ENCODE measurements at regions of chr10 and their contacts with region 1.

Region 1: DNA sequence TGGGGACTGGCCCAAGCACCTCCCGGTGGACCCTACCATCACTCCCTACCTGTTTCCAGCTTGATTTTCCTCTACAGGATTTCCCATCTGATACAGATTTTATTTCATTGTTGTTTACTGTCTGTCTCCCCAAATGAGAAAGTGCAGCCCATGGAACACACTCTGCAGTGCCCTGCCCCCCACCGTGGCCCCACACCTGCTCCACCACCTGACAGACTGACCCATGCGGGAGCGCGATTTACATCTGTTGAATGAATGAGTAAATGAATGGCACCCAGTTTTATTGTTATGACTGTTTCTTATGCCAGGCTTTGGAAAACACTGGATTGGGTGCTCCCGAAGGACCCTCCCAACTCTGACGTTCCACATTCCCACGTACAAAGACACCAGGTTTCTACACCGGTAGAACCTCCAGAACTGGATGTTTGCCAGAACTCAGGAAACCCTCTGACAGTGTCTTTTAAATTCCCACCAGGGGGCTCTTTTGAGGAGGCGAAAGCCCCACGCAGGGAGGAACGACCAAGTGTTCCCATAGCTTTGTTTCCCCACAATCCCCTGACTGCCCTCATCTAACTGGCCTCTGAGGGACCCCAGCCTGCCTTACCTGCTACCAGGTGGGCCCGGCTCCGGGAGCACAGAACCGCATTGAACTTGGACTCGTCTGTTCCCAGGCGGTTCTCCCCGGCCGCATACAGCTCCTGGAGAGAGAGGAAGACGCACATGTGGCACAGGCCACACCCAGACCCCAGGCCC is 29.0 kb downstream of the PLAC9 start:
- DNase-seq: peak in 2 of 10 donors; percentile 27 to 48
- H3K4me3 ChIP-seq: no peak overlapping the region
- H3K27ac ChIP-seq: peak overlapping the region in 40 of 59 donors; percentile 3 to 96 (median 60)
- H3K27me3 ChIP-seq: no peaks in the 10 kb centered on the region
- CTCF ChIP-seq: no peak

Region 2: DNA sequence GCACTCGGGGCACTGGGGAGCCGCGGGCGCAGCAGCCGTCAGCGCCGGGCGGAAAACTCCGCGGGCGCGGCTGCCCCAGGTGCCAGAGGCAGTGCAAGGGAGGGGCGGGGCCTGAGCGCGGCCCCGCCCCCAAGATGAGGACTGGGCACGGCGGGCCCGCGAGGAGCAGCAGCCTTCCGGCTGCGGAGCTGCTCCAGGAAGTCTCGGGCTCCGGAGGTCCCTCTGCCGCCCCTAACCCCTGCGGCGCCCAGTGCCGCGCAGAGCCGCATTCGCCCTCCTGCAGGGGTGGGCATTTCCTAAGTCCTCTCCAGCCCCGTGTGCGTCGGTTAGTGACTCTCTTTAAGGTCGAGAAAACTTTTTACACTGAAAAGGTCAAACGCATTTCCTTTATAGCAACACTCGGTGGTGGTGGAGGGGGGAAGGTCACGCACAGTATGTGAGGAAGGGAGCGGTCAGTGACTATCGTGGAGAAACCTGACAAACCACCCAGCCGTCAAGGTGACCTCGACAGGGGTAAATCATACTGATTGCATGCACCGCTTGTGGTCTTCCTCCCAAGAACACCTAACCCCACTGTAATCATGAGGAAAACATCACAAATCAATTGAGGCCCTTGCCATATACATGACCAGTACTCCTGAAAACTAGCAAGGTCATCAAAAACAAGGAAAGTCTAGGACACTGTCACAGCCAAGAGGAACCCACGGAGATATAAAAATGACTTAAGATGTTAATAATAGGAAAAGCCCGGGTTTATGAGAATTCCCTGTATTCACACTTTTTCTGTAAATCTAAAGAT is 44.2 kb after region 1 on chr10 and contains the start of gene ANXA11:
- intact Hi-C with region 1: loop called in 1 of 2 experiments (anchors 5 kb)
- DNase-seq: peak in 6 of 10 donors; percentile 38 to 75 (median 62)
- H3K4me3 ChIP-seq: peak within 1 kb of the TSS; percentile 43 to 84 (median 73)
- H3K27ac ChIP-seq: peak within 1 kb of the TSS in 58 of 59 donors; percentile 55 to 96 (median 89)
- H3K27me3 ChIP-seq: peaks cover 0 to 33% (median 0%) of the 10 kb centered on the region in 45 donors
- CTCF ChIP-seq: peak in 1 of 56 donors; percentile 7
- total RNA-seq, gene ANXA11: 47.9 to 162 (median 105) TPM